HCT116 (cell line): ENCODE measurements at regions of chr14 and their contacts with region 1.

Region 1: DNA sequence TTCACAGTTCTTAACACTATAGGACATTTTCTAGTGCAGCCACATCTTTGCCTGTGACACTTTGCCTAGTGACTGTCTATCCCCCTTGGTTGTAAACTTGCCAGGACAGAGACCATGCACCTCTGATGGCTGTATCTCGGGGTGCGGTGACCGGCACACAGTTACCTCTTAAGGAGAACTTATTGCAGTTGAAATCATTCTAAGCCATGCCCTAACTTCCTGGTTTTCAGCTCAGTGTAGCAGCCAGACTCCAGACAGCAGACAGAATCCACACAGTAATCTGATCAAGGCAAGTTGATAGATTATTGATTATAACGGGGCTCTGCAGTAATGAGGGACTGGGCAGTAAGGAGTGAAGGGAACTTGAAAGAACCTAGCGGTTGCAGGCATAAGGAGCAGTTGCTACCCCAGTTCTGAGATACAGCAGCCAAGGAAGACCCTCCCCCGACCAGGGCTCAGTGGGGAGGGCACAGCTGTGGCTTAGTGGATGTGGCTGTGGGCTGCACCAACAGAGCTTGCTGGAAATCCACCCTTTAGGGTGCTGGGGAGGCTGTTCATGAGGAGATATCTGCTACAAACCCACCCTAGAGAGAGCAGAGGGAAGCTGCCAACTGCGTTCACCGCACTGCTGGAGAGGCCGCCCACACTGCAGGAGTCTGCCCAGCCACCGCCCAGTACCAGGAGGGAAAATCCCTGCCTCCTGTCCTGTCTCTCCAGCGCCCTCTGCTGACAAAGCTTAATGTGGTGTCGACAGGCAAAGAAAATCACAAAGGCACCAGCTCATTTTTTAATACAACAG is 58.2 kb upstream of the BEGAIN start:
- DNase-seq: peak; percentile 76
- ATAC-seq: peak; percentile 92
- H3K4me3 ChIP-seq: peak overlapping the region in 1 of 2 experiments; percentile 23; a peak in 1 of 4 replicates
- H3K27ac ChIP-seq: peak overlapping the region; percentile 28; the same call in 1 of the 2 replicates
- H3K4me1 ChIP-seq: peaks cover 8 to 26% of the 10 kb centered on the region in 2 experiments
- H3K27me3 ChIP-seq: no peaks in the 10 kb centered on the region
- CTCF ChIP-seq: peak; percentile 76 to 96 (median 79)
- POLR2A ChIP-seq: no peak
- RAD21 ChIP-seq: peak; percentile 98

Region 2: GRCh38 chr14:100524933-100525243 is 120.5 kb before region 1 on chr14:
- CTCF ChIA-PET with region 1: interaction called, 15 read pairs
- POLR2A ChIA-PET with region 1: no interaction called
- RAD21 ChIA-PET with region 1: interaction called in 1 of 2 experiments, 5 read pairs
- intact Hi-C with region 1: loop called (anchors 5 kb)
- DNase-seq: no peak
- ATAC-seq: peak; percentile 77
- H3K4me3 ChIP-seq: no peak overlapping the region
- H3K27ac ChIP-seq: no peak overlapping the region
- H3K4me1 ChIP-seq: no peaks in the 10 kb centered on the region
- H3K27me3 ChIP-seq: no peaks in the 10 kb centered on the region
- CTCF ChIP-seq: peak; percentile 49 to 55 (median 55)
- POLR2A ChIP-seq: no peak
- RAD21 ChIP-seq: peak; percentile 70

Region 3: GRCh38 chr14:100540141-100540925 is 105.1 kb before region 1 on chr14:
- CTCF ChIA-PET with region 1: no interaction called
- POLR2A ChIA-PET with region 1: no interaction called
- RAD21 ChIA-PET with region 1: no interaction called
- intact Hi-C with region 1: loop called (anchors 1 kb)
- DNase-seq: no peak
- ATAC-seq: peak; percentile 92
- H3K4me3 ChIP-seq: no peak overlapping the region
- H3K27ac ChIP-seq: no peak overlapping the region; the same call in 1 of the 2 replicates
- H3K4me1 ChIP-seq: peaks cover 4 to 16% of the 10 kb centered on the region in 2 experiments; a peak in 3 of 4 replicates
- H3K27me3 ChIP-seq: no peaks in the 10 kb centered on the region
- CTCF ChIP-seq: peak in 2 of 3 experiments; percentile 62 to 79; a peak in 4 of 6 replicates
- POLR2A ChIP-seq: no peak
- RAD21 ChIP-seq: no peak

Region 4: DNA sequence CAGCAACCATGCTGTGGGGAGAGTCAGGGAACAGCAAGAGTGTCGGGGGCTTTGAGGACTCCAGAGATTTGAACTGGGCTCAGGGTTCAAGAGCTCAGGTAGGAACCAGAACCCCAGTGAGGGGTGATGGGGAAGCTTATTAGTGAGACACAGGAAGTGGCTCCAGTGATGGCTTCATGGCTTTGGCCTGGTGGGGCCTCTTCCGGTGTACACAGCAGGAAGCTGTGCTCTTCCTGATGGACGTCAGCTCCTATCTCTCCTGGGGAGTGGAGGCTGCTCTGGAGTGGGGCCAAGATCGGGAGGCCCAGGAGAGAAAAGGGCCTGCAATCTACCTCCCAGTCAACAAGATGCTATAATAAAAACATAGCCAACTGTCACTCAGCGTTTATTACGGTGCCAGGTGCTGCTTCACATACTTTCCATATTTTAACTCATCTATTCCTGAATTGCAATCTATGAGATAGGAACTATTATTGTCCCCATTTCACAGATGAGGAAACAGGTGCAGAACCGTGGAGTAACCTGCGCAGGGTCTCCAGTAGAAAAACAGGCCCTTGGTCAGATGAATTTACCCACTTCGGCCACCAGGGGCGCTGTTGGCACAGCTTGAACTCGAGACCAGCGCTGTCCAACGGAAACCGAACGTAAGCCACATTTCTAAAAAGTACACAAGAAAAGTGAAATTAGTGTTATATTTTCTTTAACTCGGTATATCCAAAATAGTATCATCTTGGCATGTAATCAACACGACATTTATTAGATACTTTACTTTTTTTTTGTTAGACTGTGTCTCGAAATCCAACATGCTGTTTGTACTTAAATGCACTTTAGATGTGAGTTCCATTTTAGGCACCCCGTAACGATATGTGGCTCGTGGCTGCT is 17.7 kb after region 1 on chr14:
- CTCF ChIA-PET with region 1: interaction called, 15 read pairs
- POLR2A ChIA-PET with region 1: interaction called, 3 read pairs
- RAD21 ChIA-PET with region 1: no interaction called
- intact Hi-C with region 1: no loop called
- DNase-seq: peak; percentile 87
- ATAC-seq: peak; percentile 78
- H3K4me3 ChIP-seq: peak overlapping the region; percentile 28 to 51
- H3K27ac ChIP-seq: peak overlapping the region; percentile 46
- H3K4me1 ChIP-seq: peaks cover 4 to 65% of the 10 kb centered on the region in 2 experiments; a peak in 3 of 4 replicates
- H3K27me3 ChIP-seq: no peaks in the 10 kb centered on the region
- CTCF ChIP-seq: peak in 2 of 3 experiments; percentile 90 to 98; a peak in 4 of 6 replicates
- POLR2A ChIP-seq: no peak
- RAD21 ChIP-seq: no peak

Region 5: DNA sequence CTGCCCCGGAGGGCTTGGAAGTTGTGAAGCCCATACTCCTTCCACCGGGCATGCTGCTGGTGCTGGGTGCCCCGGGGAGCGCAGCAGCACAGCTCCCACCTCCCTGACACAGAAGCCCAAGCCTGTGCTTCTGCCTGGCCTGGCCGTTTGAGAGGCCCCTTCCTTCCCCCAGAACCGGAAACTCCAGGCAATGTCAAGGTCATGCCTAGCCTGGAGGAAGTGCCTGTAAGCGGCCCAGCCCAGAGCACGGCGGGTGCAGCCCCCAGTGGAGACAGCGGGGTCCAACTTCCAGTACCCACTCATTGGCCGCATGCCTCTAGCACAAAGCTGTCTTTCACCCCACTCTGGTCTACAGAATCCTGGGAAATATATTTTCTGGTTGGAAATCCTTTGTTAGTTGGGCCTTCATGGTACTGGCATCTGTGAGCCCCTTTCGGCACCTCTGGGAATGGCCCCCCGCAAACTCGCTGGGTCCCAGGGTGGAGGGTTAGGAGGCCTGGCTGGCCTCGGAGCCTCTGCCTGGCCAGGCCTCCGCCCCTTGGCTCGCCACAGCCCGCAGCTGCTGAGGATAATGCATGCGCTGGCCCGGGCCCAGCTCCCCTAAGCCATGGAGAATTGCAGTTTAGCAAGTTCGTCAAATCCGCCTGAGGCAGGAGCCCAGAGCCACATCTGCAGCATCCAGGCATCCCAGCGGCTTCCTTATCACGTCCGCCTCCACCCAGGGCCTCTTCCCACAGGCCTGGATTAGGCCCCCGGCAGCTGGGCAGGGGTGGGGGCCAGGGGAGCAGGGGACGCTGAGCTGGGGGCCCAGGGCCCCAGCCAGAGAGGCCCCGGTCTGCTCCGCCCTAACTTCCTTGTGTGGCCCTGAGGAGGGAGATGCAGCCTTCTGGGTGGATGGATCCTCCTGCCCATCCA is 32.4 kb after region 1 on chr14:
- CTCF ChIA-PET with region 1: no interaction called
- POLR2A ChIA-PET with region 1: no interaction called
- RAD21 ChIA-PET with region 1: no interaction called
- intact Hi-C with region 1: no loop called
- DNase-seq: no peak
- ATAC-seq: peak; percentile 13; the same call in 1 of the 2 replicates
- H3K4me3 ChIP-seq: no peak overlapping the region
- H3K27ac ChIP-seq: no peak overlapping the region
- H3K4me1 ChIP-seq: peaks cover 0 to 11% of the 10 kb centered on the region in 2 experiments; a peak in 1 of 4 replicates
- H3K27me3 ChIP-seq: no peaks in the 10 kb centered on the region
- CTCF ChIP-seq: no peak
- POLR2A ChIP-seq: no peak
- RAD21 ChIP-seq: no peak